ENCODE measurements at regions of chr9 and their contacts with region 1.

Region 1: GRCh38 chr9:131502781-131503625 is at the start of gene POMT1:
- DNase-seq: peak; percentile 98
- H3K4me3 Mint-ChIP-seq: peak within 1 kb of the TSS; percentile 99
- H3K27ac Mint-ChIP-seq: peak within 1 kb of the TSS; percentile 91
- H3K4me1 Mint-ChIP-seq: peaks cover 44% of the 10 kb centered on the region
- H3K27me3 Mint-ChIP-seq: no peaks in the 10 kb centered on the region
- total RNA-seq, gene POMT1: 32.8 and 34.6 TPM in 2 replicates

Region 2: GRCh38 chr9:131214286-131214856 is 288.6 kb before region 1 on chr9:
- intact Hi-C with region 1: no loop called
- DNase-seq: no peak
- H3K4me3 Mint-ChIP-seq: no peak overlapping the region
- H3K27ac Mint-ChIP-seq: no peak overlapping the region
- H3K4me1 Mint-ChIP-seq: peaks cover 10% of the 10 kb centered on the region
- H3K27me3 Mint-ChIP-seq: no peaks in the 10 kb centered on the region

Region 3: DNA sequence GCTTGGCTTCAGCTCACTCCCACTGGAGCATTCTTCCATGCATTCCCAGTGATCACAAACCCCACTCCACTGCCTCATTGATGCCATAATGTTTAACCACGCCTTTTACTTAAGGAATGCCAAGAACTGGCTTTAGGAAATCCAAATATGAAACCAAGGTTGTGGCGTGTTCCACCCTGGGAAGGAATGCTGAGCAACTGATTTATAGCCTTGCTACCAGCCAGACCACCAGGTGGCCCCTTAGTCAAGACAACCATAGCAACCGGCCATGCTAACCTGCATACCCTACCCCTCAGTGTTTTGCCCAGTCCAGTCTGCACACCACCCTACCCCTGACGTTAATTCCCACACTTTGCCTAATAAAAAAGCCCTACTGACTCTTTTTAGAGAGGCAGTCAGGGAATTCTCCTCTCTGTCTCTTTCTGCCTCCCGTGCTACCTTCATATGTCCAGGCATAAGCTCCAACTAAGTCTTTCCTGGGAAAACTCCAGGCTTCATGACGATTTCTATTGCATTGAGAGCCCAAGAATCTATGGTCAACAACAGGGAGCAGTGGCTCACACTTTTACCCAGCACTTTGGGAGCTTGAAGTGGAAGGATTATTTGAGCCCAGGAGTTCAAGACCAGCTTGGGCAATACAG is 136.1 kb before region 1 on chr9:
- intact Hi-C with region 1: loop called (anchors 2 kb)
- DNase-seq: no peak
- H3K4me3 Mint-ChIP-seq: no peak overlapping the region
- H3K27ac Mint-ChIP-seq: no peak overlapping the region
- H3K4me1 Mint-ChIP-seq: peaks cover 4% of the 10 kb centered on the region
- H3K27me3 Mint-ChIP-seq: peaks cover 3% of the 10 kb centered on the region

Region 4: GRCh38 chr9:131530920-131531832 is 28.2 kb after region 1 on chr9 and contains the start of gene UCK1:
- intact Hi-C with region 1: loop called (anchors 2 kb)
- DNase-seq: peak; percentile 93
- H3K4me3 Mint-ChIP-seq: peak within 1 kb of the TSS; percentile 86
- H3K27ac Mint-ChIP-seq: peak within 1 kb of the TSS; percentile 79
- H3K4me1 Mint-ChIP-seq: peaks cover 15% of the 10 kb centered on the region
- H3K27me3 Mint-ChIP-seq: no peaks in the 10 kb centered on the region
- total RNA-seq, gene UCK1: 25.2 and 27.9 TPM in 2 replicates

Region 5: DNA sequence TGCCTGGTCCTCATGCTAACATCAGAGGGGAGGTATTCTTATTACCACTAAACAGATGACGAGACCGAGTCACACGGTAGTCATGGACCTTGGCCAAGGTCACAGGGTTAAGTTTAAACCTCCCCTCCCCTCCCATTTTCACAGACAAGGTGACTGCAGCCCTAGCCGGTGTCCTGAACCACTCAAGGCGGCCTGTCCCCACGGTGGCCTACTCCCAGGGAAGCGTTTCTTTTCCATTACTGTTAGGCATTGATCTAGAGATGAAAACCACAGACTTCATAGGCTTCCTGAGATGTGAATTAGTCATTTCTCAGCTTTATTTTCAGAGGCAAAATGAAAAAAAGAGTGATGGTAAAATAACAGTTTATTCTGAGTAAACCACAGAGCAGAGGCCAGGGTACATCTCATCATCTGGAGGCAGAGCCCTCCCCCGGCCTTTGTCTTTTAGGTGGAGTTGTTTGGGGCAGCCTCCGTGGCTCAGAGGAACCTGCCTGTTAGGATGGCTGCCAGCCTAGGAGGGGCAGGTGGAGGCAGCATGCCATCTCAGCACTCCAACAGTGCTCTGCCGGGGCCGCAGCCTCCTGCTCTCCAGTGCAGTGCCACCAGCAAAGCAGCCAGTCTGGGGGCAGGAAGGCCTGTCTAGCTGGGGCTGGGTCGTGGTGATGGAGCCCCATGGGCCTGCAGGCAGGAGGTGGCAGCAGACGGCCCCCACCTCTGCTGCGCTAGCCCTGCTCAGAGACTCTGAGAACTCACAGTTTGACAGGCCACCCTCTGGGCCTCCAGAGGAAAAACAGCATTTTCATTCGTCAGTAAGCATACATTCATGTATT is 165.7 kb after region 1 on chr9:
- intact Hi-C with region 1: loop called (anchors 5 kb)
- DNase-seq: peak; percentile 90
- H3K4me3 Mint-ChIP-seq: peak overlapping the region; percentile 78
- H3K27ac Mint-ChIP-seq: peak overlapping the region; percentile 100
- H3K4me1 Mint-ChIP-seq: peaks cover 79% of the 10 kb centered on the region
- H3K27me3 Mint-ChIP-seq: no peaks in the 10 kb centered on the region

Region 6: GRCh38 chr9:131739980-131740648 is 237.1 kb after region 1 on chr9 and contains the start of gene RAPGEF1:
- intact Hi-C with region 1: loop called (anchors 2 kb)
- DNase-seq: peak; percentile 97
- H3K4me3 Mint-ChIP-seq: peak within 1 kb of the TSS; percentile 100
- H3K27ac Mint-ChIP-seq: peak within 1 kb of the TSS; percentile 93
- H3K4me1 Mint-ChIP-seq: peaks cover 60% of the 10 kb centered on the region
- H3K27me3 Mint-ChIP-seq: no peaks in the 10 kb centered on the region
- total RNA-seq, gene RAPGEF1: 150 and 153 TPM in 2 replicates

Region 7: GRCh38 chr9:132240753-132241493 is 737.9 kb after region 1 on chr9:
- intact Hi-C with region 1: loop called (anchors 10 kb)
- DNase-seq: peak; percentile 99
- H3K4me3 Mint-ChIP-seq: peak overlapping the region; percentile 95
- H3K27ac Mint-ChIP-seq: peak overlapping the region; percentile 90
- H3K4me1 Mint-ChIP-seq: peaks cover 14% of the 10 kb centered on the region
- H3K27me3 Mint-ChIP-seq: peaks cover 25% of the 10 kb centered on the region

Measured in activated CD4-positive, alpha-beta T cell treated with anti-CD3 and anti-CD28 coated beads, Interleukin-2, amount 10 ng/mL, durations not matched to agents 24 days and 14 days (primary cell).